ENCODE measurements at regions of chr1 and their contacts with region 1.

Region 1: DNA sequence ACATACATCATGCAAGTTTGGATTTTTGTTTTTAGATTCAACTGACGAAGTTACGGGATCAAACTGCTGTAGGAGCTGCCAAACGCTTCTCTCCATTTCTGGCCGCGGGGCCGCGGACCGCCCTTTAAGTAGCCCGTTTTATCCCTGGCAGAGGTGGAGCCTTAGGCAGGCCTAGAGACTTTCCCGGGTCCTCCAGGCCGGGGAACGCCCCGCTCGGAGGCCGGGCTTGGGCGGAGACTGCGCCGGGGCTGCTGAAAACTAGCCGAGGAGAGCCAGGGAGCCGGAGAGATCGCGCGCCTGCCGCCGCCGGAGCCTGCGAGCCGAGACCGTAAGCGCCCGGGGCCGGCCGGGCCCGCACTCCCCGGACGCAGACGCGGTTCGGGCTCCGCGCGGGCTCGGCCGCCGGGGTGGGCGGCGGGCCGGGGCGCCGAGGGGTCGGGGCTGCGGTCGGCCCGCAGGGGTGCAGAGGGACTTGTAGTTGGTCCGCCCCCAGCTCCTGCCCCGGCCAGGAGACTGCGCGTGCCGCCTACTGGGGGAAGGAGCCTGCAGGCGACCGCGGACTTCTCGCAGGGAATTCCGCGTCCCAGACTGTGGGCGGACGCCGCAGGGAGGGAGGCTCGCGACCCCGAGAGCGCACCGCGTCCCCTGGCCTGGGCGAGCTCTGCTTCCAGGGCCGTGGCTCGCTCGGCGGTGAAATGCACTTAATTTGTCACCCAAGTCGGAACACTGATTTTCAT is at the start of gene EPHX1:
- DNase-seq: peak; percentile 97
- H3K4me3 Mint-ChIP-seq: peak within 1 kb of the TSS; percentile 92
- H3K27ac Mint-ChIP-seq: peak within 1 kb of the TSS; percentile 82
- H3K4me1 Mint-ChIP-seq: peaks cover 25% of the 10 kb centered on the region
- H3K27me3 Mint-ChIP-seq: no peaks in the 10 kb centered on the region
- CTCF ChIP-seq: peak; percentile 35
- total RNA-seq, gene EPHX1: 25.0 and 35.8 TPM in 2 replicates

Region 2: DNA sequence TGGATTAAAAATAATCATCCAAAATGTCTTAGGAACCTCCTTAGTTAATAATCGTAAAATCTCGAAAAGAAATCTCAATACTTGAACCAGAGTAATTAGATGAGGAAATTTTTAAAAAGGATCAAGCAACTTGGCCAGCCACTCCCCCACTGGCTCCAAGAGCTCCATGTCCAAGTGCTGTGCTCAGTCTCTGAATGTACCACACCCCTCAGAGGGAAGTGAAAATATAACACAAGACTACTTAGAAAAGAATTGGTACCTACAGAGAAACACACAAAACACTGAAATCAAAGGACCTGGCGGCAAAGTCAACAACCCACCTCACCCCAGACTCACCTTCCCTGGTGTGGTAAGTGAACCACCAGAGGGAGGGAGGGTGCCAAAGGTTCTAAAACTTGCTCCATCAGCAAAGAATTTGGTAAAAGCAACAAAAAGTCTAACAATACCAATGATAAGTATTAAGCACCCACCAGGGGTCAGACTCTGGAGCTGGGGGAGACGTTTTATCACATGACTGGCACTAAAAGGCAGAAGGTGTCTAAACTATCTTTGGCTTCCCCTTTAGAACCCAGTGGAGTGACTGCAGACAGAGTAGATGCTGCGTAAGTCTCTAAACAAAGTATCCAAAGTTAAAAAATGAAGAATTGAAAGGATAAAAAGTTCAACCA is 396.2 kb before region 1 on chr1:
- CTCF ChIA-PET with region 1: no interaction called
- POLR2A ChIA-PET with region 1: no interaction called
- intact Hi-C with region 1: no loop called
- DNase-seq: no peak
- H3K4me3 Mint-ChIP-seq: no peak overlapping the region
- H3K27ac Mint-ChIP-seq: no peak overlapping the region
- H3K4me1 Mint-ChIP-seq: peaks cover 7% of the 10 kb centered on the region
- H3K27me3 Mint-ChIP-seq: no peaks in the 10 kb centered on the region
- CTCF ChIP-seq: no peak

Region 3: GRCh38 chr1:225825607-225826007 is 15.6 kb after region 1 on chr1:
- CTCF ChIA-PET with region 1: interaction called, 21 read pairs
- POLR2A ChIA-PET with region 1: interaction called, 42 read pairs
- intact Hi-C with region 1: no loop called
- DNase-seq: no peak
- H3K4me3 Mint-ChIP-seq: no peak overlapping the region
- H3K27ac Mint-ChIP-seq: peak overlapping the region; percentile 3
- H3K4me1 Mint-ChIP-seq: peaks cover 21% of the 10 kb centered on the region
- H3K27me3 Mint-ChIP-seq: no peaks in the 10 kb centered on the region
- CTCF ChIP-seq: no peak

Region 4: GRCh38 chr1:225875044-225875814 is 65.2 kb after region 1 on chr1:
- CTCF ChIA-PET with region 1: interaction called, 43 read pairs
- POLR2A ChIA-PET with region 1: interaction called, 34 read pairs
- intact Hi-C with region 1: no loop called
- DNase-seq: peak; percentile 75
- H3K4me3 Mint-ChIP-seq: no peak overlapping the region
- H3K27ac Mint-ChIP-seq: peak overlapping the region; percentile 62
- H3K4me1 Mint-ChIP-seq: peaks cover 38% of the 10 kb centered on the region
- H3K27me3 Mint-ChIP-seq: no peaks in the 10 kb centered on the region
- CTCF ChIP-seq: no peak

Region 5: DNA sequence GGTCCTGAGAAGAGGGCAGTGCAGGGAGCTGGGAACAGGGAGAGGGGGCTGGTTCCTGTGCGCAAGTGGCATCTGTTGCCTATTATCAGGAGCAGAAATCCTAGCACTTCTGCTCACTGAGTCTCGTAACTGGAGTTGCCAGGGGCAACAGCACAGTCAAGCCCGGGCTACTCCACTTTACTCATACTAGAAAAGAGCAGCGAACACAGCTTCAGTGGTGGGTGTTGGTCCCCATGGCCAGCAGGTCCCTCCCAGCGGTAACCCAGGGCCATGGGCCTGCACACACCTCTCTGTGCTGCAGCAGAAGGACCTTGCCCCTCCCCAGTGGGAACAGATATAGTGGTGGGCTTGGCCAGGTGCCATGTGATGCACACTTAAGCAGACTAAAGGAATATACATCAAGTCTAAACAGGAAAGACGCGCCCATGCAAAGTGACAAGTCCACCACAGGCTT is 105.6 kb after region 1 on chr1:
- CTCF ChIA-PET with region 1: interaction called, 3 read pairs
- POLR2A ChIA-PET with region 1: interaction called, 10 read pairs
- intact Hi-C with region 1: no loop called
- DNase-seq: no peak
- H3K4me3 Mint-ChIP-seq: no peak overlapping the region
- H3K27ac Mint-ChIP-seq: no peak overlapping the region
- H3K4me1 Mint-ChIP-seq: peaks cover 24% of the 10 kb centered on the region
- H3K27me3 Mint-ChIP-seq: no peaks in the 10 kb centered on the region
- CTCF ChIP-seq: no peak

Region 6: DNA sequence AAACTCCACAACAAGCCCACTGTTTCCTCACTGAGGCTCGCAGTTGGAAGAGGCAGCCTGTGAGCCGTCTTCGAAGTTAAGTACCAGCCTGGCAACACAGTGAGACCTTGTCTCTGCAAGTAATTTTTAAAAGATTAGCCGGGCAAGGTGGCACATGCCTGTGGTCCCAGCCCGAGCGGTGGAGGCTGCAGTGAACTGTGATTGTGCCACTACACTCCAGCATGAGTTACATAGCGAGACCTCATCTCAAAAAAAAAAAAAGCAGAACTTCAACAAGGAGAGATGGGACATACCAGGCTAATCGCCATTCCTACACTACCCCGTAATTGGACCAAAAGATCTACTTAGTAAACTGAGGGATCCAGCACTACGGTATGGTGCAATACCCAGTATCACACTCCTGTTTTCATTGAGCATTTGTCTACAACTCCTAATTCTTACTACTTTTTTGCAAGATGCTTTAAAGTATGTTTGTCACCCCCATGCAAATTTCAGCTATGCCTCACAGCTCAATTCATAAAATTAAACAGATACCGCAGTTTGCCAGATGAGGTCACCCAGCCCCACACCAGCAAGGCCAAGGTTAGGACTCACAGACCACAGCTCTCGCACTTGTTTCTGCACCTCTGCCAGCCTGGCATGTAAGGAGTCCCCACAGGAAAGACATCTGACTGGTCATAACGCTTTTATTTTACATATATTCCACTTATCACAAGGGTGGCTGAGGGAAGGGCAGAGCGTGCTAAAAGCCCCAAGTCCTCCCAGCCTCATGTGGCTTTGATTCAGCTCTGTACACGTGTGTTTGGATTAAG is 168.1 kb after region 1 on chr1:
- CTCF ChIA-PET with region 1: interaction called, 17 read pairs
- POLR2A ChIA-PET with region 1: interaction called, 6 read pairs
- intact Hi-C with region 1: no loop called
- DNase-seq: no peak
- H3K4me3 Mint-ChIP-seq: no peak overlapping the region
- H3K27ac Mint-ChIP-seq: no peak overlapping the region
- H3K4me1 Mint-ChIP-seq: peaks cover 5% of the 10 kb centered on the region
- H3K27me3 Mint-ChIP-seq: no peaks in the 10 kb centered on the region
- CTCF ChIP-seq: no peak

Measured in MCF 10A (cell line).